Right cardiac atrium (tissue), 5 donors: ENCODE measurements at regions of chr18 and their contacts with region 1.

Region 1: DNA sequence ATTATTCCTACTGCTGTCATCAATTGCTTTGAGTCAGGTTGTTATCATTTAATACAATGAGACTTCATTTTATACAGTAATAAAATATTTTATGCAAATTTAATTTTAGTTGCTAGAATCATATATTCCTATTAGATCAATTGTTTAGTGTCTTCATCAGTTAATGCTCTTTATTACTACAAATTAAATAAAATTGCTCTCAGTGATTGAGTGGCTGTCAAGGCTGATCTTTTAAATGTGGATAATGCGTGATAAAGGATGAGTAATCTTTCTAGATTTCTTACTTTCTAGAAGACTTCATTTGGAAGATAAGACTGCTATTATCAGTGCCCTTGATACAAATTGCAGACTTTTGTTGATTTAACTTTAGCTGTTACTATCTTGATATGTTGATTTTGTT is 59.6 kb upstream of the CDH2 start:
- DNase-seq: no peak
- ATAC-seq: no peak
- H3K4me3 ChIP-seq: no peak overlapping the region
- H3K27ac ChIP-seq: no peak overlapping the region
- H3K4me1 ChIP-seq: no peaks in the 10 kb centered on the region
- H3K27me3 ChIP-seq: no peaks in the 10 kb centered on the region

Region 2: DNA sequence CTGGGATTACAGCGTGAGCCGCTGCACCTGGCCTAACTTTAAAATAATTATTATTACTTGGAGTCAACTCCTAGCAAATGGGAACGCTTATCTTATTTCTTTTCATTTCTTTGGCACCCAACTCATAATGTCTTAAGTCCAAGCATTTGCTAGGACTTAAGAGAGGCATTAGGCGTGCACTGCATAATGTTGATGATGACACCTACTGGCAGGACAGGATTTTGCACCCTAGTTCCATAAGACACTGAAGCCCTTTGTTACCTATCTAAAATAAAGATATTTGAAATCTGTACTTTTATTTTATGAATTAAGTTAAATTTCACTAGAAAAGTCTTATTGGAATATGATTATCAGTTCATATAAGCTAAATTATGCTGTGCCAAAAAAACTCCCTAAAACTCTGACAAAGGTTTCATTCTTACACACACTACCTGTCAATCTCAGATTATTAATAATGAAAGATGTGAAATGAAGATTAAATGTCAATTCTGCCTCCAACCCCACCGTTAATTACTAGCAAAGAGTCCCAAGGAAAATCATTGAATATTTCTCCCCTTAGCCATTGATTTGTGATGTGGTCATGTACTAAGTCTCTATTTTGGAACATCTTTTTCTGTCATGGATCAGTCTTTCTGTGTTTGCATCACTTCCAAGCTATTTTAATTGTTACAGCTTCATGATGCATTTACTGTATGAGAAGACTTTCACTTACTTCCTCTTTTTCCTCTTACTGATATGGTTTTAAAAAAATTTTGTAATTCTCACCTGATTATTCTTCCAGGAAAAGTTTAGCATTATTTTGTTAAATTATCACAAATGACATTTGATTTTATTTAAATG is 46.9 kb before region 1 on chr18:
- intact Hi-C with region 1: loop called in 1 of 4 experiments (anchors 5 kb)
- DNase-seq: no peak
- ATAC-seq: peak; percentile 55
- H3K4me3 ChIP-seq: no peak overlapping the region
- H3K27ac ChIP-seq: no peak overlapping the region
- H3K4me1 ChIP-seq: no peaks in the 10 kb centered on the region
- H3K27me3 ChIP-seq: no peaks in the 10 kb centered on the region